CD8-positive, alpha-beta T cell (primary cell): ENCODE measurements at regions of chr16 and their contacts with region 1.

Region 1: DNA sequence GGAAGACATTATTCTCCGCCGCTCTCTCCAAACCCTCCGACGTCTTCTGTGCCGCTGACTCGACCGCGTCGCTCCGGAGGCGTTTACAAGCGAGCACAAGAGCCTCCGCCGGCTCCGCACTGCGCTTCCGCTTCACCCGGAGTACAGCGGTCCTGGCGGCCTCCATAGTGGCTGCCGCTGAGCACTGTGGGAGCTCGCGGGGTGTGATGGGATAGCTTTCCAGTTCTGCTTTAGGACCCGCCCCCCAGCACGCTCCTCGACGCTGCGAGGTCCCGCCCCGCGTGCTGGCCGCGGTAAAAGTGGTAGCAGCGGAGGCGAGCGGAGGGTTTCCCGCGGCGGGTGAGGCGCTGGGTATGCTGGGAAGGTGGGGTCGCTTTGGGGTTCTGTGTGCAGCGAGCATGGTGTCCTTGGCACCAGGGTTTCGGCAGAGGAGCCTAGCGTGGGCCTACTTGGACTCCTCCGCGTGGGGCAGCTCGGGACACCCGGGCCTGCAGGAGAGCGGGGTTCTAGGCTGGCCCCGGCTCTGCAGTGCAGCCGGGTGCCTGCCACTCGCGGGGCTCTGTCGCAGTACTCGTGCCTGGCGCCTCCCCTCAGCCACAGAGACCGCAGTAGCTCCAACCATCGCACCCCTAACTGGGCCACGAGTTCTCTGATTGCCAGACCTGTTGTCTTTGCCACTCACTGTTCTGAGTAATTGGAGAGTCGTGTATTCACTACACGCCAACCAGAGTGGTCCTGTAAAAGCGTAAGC is at the starts of genes PRMT7 and SLC7A6OS:
- DNase-seq: peak; percentile 77 to 96 (median 92)
- ATAC-seq: peak; percentile 97
- H3K4me3 ChIP-seq: peak within 1 kb of the TSS; percentile 84 to 92
- H3K4me3 Mint-ChIP-seq: peak within 1 kb of the TSS; percentile 97
- H3K27ac ChIP-seq: peak within 1 kb of the TSS; percentile 70 to 81
- H3K27ac Mint-ChIP-seq: peak within 1 kb of the TSS; percentile 98
- H3K4me1 ChIP-seq: peaks cover 46% of the 10 kb centered on the region
- H3K4me1 Mint-ChIP-seq: peaks cover 62% of the 10 kb centered on the region
- H3K27me3 ChIP-seq: no peaks in the 10 kb centered on the region
- H3K27me3 Mint-ChIP-seq: no peaks in the 10 kb centered on the region
- CTCF ChIP-seq: peak; percentile 8
- total RNA-seq, gene PRMT7: 53.8 to 58.7 TPM
- total RNA-seq, gene SLC7A6OS: 39.4 to 44.2 TPM

Region 2: DNA sequence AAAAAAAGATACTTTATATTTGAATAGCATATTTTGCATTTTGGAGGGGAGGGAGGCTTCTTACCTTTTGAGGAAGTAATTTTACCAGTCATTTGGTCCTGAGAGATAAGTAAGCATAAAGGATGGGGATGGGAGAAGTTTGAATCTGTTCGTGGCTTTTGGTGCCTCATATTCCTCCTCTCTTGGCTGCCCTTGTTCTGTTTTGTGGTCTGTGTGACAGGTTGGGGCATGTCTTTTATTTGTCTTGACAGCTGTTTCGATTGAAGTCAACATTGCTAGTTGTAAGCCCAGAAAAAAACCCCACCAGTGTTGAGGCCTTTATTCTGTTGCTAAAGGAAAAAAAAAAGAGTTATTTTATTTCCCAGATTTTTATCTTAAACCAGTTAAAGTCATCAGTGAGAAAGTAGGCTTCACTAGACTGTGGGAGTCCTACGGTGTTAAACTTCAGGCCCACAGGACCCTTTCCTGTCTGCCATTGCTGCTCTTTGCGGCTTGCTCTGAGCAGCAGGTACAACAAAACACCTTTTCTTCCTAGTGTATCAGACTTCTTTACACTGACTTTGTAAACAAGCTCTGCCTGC is 35.2 kb before region 1 on chr16:
- CTCF ChIA-PET with region 1: interaction called, 11 read pairs
- POLR2A ChIA-PET with region 1: interaction called, 17 read pairs
- intact Hi-C with region 1: no loop called
- DNase-seq: peak in 7 of 9 experiments; percentile 37 to 87 (median 70)
- ATAC-seq: peak; percentile 79
- H3K4me3 ChIP-seq: peak overlapping the region in 1 of 2 experiments; percentile 19
- H3K4me3 Mint-ChIP-seq: peak overlapping the region; percentile 70
- H3K27ac ChIP-seq: peak overlapping the region; percentile 31 to 77
- H3K27ac Mint-ChIP-seq: peak overlapping the region; percentile 96
- H3K4me1 ChIP-seq: peaks cover 77% of the 10 kb centered on the region
- H3K4me1 Mint-ChIP-seq: peaks cover 64% of the 10 kb centered on the region
- H3K27me3 ChIP-seq: no peaks in the 10 kb centered on the region
- H3K27me3 Mint-ChIP-seq: no peaks in the 10 kb centered on the region
- CTCF ChIP-seq: no peak

Region 3: DNA sequence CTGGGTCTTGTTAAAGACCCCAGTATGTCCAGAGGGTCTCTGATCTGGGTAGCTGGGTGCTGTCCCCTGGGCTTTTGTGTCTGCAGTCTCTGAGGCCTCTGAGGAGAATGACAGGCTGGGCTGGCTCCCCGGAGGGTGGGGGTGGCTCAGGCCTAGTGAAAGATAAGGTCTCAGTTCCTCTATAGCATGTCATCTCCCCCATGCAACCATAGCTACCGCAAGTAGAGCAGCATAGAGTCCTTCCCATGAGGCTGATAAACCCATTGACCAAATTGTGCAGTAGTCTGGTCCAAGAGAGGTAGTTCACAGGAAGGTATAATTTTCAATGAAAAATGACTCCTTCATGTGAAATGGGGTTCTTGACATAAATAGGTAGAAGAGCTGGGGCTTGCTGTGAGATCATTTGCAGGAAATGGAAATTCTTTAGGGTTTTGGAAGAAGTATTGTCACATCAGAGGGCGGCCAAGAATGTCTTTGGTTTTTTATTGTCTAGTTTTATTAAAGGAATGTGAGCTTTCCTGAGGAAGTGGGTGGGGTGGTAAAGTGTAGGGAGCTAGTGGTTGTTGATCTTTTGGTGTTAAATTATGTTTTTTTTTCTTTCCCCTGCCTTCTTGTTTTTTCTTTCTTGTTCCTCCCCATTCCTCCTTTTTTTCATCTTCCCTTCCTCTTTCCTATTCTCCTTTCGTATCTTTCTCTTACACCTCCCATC is 21.2 kb before region 1 on chr16:
- CTCF ChIA-PET with region 1: interaction called, 20 read pairs
- POLR2A ChIA-PET with region 1: interaction called, 33 read pairs
- intact Hi-C with region 1: loop called in 1 of 2 experiments (anchors 1 kb)
- DNase-seq: peak in 7 of 9 experiments; percentile 32 to 64 (median 56)
- ATAC-seq: peak; percentile 44
- H3K4me3 ChIP-seq: no peak overlapping the region
- H3K4me3 Mint-ChIP-seq: peak overlapping the region; percentile 53
- H3K27ac ChIP-seq: peak overlapping the region; percentile 26 to 82
- H3K27ac Mint-ChIP-seq: peak overlapping the region; percentile 90
- H3K4me1 ChIP-seq: peaks cover 82% of the 10 kb centered on the region
- H3K4me1 Mint-ChIP-seq: peaks cover 84% of the 10 kb centered on the region
- H3K27me3 ChIP-seq: no peaks in the 10 kb centered on the region
- H3K27me3 Mint-ChIP-seq: no peaks in the 10 kb centered on the region
- CTCF ChIP-seq: no peak

Region 4: DNA sequence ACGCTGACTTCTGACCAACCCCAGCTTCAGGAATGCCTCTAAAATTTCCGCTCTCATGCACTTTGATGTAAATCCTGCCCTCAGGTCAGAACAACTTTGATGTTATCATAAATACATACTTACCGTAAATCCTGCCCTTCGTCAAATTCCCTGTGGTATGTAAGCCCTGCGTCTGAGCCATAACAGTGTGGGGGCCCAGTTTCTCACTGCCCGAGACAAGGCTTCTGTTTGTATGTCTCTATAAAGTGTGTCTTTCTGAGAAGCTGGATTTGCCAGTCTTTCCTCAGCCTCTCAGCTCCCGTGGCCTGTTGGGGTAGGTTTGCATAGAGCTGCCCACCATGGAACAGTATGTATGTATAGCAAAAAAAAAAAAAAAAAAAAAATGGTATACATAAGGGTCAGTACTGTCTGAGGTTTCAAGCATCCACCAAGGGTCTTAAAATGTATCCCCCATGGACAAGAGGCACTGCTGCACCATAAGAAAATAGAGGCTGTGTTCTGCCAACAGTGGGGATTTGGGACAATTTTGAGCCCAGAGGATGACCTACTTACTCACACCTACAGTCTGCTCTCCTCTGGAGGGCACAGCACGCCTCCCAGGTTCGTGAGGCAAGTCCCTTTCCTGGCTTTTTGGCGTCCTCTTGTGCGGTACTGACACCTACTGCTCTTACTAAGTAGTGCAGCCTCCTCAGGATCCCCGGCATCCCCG is 17.4 kb after region 1 on chr16:
- CTCF ChIA-PET with region 1: interaction called, 14 read pairs
- POLR2A ChIA-PET with region 1: interaction called, 5 read pairs
- intact Hi-C with region 1: loop called (anchors 1 kb)
- DNase-seq: peak; percentile 59 to 90 (median 77)
- ATAC-seq: peak; percentile 100
- H3K4me3 ChIP-seq: no peak overlapping the region
- H3K4me3 Mint-ChIP-seq: no peak overlapping the region
- H3K27ac ChIP-seq: no peak overlapping the region
- H3K27ac Mint-ChIP-seq: no peak overlapping the region
- H3K4me1 ChIP-seq: no peaks in the 10 kb centered on the region
- H3K4me1 Mint-ChIP-seq: peaks cover 7% of the 10 kb centered on the region
- H3K27me3 ChIP-seq: no peaks in the 10 kb centered on the region
- H3K27me3 Mint-ChIP-seq: no peaks in the 10 kb centered on the region
- CTCF ChIP-seq: peak; percentile 97

Region 5: DNA sequence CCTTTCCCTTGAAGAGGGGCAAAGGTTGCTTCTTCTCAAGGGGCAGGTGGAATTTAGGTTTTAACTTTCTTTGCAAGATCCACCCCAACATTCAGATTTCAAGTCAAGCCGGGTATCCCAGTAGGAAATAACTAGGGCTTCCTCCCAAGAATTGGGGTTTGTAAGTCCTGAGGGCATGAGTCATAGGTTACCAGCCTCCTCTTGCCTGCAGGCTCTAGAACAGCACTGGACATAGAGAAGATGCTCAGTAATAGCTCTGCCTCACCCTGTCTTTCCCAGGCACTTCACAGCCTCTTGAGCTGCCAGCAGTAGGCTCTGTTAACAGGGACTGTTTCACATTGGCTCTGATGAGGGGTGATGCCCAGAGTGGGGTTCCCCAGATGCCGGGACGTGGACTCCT is 192.4 kb after region 1 on chr16:
- CTCF ChIA-PET with region 1: no interaction called
- POLR2A ChIA-PET with region 1: no interaction called
- intact Hi-C with region 1: no loop called
- DNase-seq: no peak
- ATAC-seq: no peak
- H3K4me3 ChIP-seq: no peak overlapping the region
- H3K4me3 Mint-ChIP-seq: no peak overlapping the region
- H3K27ac ChIP-seq: no peak overlapping the region
- H3K27ac Mint-ChIP-seq: no peak overlapping the region
- H3K4me1 ChIP-seq: no peaks in the 10 kb centered on the region
- H3K4me1 Mint-ChIP-seq: peaks cover 5% of the 10 kb centered on the region
- H3K27me3 ChIP-seq: no peaks in the 10 kb centered on the region
- H3K27me3 Mint-ChIP-seq: no peaks in the 10 kb centered on the region
- CTCF ChIP-seq: no peak